Endothelial cell of umbilical vein (primary cell): ENCODE measurements at regions of chrX and their contacts with region 1.

Region 1: DNA sequence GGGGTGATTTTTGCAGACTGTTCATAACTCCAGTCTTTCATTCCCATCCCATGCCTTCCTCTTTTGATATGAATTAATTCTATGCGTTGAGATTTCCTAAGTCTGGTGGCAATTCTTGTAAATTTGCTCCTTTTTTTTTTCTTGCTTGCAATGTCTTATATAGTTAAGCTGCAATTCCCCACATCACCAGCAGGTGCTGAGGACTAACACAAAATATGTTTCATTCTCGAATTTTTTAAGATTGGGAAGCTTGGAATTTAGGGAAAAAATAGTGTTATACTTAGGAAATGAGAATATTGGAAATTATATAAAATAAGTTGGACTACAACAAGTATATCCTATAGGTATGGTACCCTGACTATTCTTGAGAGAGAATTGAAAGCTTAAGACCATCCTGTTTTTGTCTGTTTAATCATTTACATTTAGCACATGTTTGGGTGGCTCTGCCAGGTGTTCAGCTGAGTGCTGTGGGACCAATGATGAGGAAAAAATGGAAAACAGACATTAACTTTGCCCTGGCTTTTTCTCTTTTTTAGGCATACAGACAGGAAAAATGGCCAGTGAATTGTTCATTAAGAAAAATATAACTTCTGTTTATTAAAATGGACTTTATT is 30.2 kb downstream of the AFF2 start:
- DNase-seq: peak; percentile 10
- H3K4me3 ChIP-seq: no peak overlapping the region
- H3K27ac ChIP-seq: no peak overlapping the region
- H3K4me1 ChIP-seq: no peaks in the 10 kb centered on the region
- H3K27me3 ChIP-seq: no peaks in the 10 kb centered on the region
- CTCF ChIP-seq: peak; percentile 23 to 29
- POLR2A ChIP-seq: no peak

Region 2: DNA sequence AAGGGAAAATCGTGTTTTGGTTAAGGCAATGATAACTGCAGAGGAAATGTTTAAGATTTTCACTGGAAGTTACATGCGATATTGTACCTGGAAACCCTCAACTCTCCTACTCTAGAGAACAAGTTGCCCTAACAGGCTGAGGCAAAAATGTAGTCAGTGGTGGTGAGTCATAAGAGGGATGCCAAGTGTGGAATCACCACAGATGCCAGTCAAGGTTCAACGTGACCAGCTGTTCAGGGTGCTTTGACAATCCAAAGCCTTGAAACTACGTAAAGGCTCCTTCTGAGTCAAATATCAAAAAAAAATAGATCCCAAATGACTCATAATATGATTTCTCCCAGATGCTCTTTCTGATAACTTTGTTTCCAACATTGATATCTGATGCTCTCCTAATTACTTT is 108.0 kb before region 1 on chrX:
- CTCF ChIA-PET with region 1: no interaction called
- POLR2A ChIA-PET with region 1: no interaction called
- dilution Hi-C with region 1: no loop called
- intact Hi-C with region 1: no loop called
- DNase-seq: no peak
- H3K4me3 ChIP-seq: no peak overlapping the region
- H3K27ac ChIP-seq: no peak overlapping the region
- H3K4me1 ChIP-seq: no peaks in the 10 kb centered on the region
- H3K27me3 ChIP-seq: no peaks in the 10 kb centered on the region
- CTCF ChIP-seq: no peak
- POLR2A ChIP-seq: no peak

Region 3: DNA sequence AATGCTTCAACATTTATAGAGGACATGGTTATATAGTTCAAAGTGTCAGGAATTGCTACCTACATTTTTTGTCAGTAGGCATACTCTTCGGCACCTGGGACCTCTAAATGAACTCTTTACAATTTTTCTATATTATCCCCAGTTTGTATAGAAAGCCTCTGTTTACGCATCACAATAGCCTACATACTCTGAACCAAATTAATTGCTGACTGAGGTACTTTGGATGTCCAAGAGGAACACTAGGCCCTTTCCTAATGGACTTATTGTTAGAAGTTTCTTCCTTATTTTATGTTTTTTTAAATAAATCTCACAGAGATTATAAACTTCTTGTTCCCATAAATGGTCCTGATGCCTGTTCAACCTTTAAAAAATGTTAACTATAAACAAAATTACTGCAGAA is 38.5 kb before region 1 on chrX:
- CTCF ChIA-PET with region 1: no interaction called
- POLR2A ChIA-PET with region 1: no interaction called
- dilution Hi-C with region 1: no loop called
- intact Hi-C with region 1: no loop called
- DNase-seq: no peak
- H3K4me3 ChIP-seq: no peak overlapping the region
- H3K27ac ChIP-seq: no peak overlapping the region
- H3K4me1 ChIP-seq: no peaks in the 10 kb centered on the region
- H3K27me3 ChIP-seq: no peaks in the 10 kb centered on the region
- CTCF ChIP-seq: no peak
- POLR2A ChIP-seq: no peak

Region 4: GRCh38 chrX:148541544-148541983 is 11.0 kb after region 1 on chrX:
- CTCF ChIA-PET with region 1: interaction called, 12 read pairs
- POLR2A ChIA-PET with region 1: no interaction called
- dilution Hi-C with region 1: no loop called
- intact Hi-C with region 1: no loop called
- DNase-seq: no peak
- H3K4me3 ChIP-seq: no peak overlapping the region
- H3K27ac ChIP-seq: no peak overlapping the region
- H3K4me1 ChIP-seq: no peaks in the 10 kb centered on the region
- H3K27me3 ChIP-seq: no peaks in the 10 kb centered on the region
- CTCF ChIP-seq: no peak
- POLR2A ChIP-seq: no peak

Region 5: GRCh38 chrX:148588649-148589310 is 58.2 kb after region 1 on chrX:
- CTCF ChIA-PET with region 1: no interaction called
- POLR2A ChIA-PET with region 1: no interaction called
- dilution Hi-C with region 1: no loop called
- intact Hi-C with region 1: no loop called
- DNase-seq: no peak
- H3K4me3 ChIP-seq: no peak overlapping the region
- H3K27ac ChIP-seq: no peak overlapping the region
- H3K4me1 ChIP-seq: no peaks in the 10 kb centered on the region
- H3K27me3 ChIP-seq: no peaks in the 10 kb centered on the region
- CTCF ChIP-seq: no peak
- POLR2A ChIP-seq: no peak

Region 6: GRCh38 chrX:149470955-149471354 is 940.4 kb after region 1 on chrX:
- CTCF ChIA-PET with region 1: interaction called, 5 read pairs
- POLR2A ChIA-PET with region 1: no interaction called
- dilution Hi-C with region 1: no loop called
- intact Hi-C with region 1: loop called (anchors 2 kb)
- DNase-seq: peak; percentile 67
- H3K4me3 ChIP-seq: no peak overlapping the region
- H3K27ac ChIP-seq: no peak overlapping the region
- H3K4me1 ChIP-seq: peaks cover 5% of the 10 kb centered on the region
- H3K27me3 ChIP-seq: no peaks in the 10 kb centered on the region
- CTCF ChIP-seq: peak; percentile 72 to 75
- POLR2A ChIP-seq: no peak